ENCODE measurements at regions of chr2 and their contacts with region 1.

Region 1: DNA sequence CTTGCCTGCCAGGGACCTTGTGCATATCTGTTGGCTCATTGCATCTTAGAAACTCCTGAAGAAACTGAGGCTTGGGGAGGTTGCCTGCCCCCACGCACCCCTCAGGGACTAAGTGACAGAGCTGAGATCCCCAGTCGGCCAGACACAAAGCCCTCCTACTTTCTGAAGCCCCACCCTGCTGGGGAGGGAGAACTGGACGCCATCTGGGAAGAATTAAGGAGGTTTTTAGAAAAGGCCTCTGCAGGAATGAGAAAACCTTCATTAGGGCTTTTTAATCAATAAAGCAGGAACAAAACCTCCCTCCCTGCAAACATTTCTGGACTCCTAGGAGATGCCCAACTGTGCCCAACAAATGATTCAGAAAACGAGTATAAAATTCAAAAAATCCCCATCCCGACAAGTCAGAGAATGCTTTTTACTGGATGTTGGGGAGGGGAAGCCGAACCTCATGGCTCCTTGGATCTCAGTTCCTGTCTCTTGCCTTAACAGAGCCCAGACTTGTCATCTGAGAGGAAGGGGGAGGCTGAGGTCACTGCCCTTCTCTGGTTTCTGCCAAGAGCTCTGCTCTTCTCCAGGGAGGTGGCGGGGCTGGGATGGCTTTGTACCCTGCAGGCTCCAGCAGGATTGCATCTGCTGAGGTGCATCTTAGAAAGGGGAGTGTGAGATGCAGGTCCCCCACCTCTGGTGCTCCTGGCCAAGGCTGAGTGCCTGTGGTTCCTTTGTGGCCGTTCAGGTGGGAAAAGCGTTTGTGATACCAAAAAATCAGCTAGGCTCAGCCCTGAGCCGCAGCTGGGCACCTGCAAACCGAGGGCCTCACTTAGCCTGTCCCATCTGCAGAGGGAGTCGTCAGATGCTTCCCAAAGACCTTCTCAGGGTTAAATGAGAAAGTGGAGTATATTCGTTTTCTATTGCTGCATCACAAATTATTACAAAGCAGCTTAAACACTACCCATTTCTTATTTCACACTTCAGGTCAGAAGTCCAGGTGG is 142.4 kb downstream of the ZFP36L2 start:
- DNase-seq: peak in 3 of 4 experiments; percentile 29 to 35 (median 35)
- ATAC-seq: no peak; the same call in 2 of the 3 replicates
- H3K4me3 ChIP-seq: no peak overlapping the region
- H3K27ac ChIP-seq: no peak overlapping the region
- H3K4me1 ChIP-seq: peaks cover 20 to 28% of the 10 kb centered on the region in 2 experiments
- H3K27me3 ChIP-seq: no peaks in the 10 kb centered on the region
- CTCF ChIP-seq: no peak
- EP300 ChIP-seq: no peak
- POLR2A ChIP-seq: no peak
- RAD21 ChIP-seq: no peak

Region 2: DNA sequence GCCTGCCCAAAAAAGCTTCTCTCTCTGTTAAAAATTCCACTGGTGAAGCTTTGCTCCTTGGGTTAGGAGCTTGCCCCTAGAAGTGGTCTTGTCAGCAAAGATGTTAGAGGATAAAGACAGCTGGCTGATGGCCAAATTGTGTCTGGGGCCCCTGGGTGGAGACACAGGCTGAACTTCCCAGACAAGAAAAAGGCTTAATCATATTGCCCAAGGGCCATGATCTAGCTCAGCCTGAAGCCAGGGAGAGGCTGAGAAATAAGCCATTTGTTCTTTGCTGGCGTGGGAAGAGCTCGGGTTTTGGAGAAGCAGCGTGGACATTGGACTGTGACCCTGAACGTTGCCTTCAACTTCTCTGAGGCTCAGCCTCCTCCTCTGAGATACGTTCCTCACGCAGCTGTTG is 10.6 kb before region 1 on chr2:
- CTCF ChIA-PET with region 1: no interaction called
- POLR2A ChIA-PET with region 1: interaction called, 21 read pairs
- in situ Hi-C with region 1: no loop called
- intact Hi-C with region 1: no loop called
- DNase-seq: peak; percentile 70 to 81 (median 74)
- ATAC-seq: peak; percentile 73
- H3K4me3 ChIP-seq: no peak overlapping the region
- H3K27ac ChIP-seq: peak overlapping the region; percentile 68
- H3K4me1 ChIP-seq: peaks cover 19 to 30% of the 10 kb centered on the region in 2 experiments
- H3K27me3 ChIP-seq: no peaks in the 10 kb centered on the region
- CTCF ChIP-seq: no peak
- EP300 ChIP-seq: peak; percentile 33; the same call in 1 of the 2 replicates
- POLR2A ChIP-seq: no peak
- RAD21 ChIP-seq: peak in 1 of 2 experiments; percentile 17; a peak in 1 of 4 replicates

Measured in K562 (cell line).